Heart right ventricle (tissue), 16 donors: ENCODE measurements at regions of chr15 and their contacts with region 1.

Region 1: GRCh38 chr15:90879408-90880366 is 4.6 kb upstream of the FES start:
- DNase-seq: no peak
- ATAC-seq: no peak
- H3K4me3 ChIP-seq: no peak overlapping the region
- H3K27ac ChIP-seq: no peak overlapping the region
- H3K4me1 ChIP-seq: peaks cover 5 to 30% (median 19%) of the 10 kb centered on the region in 9 donors
- H3K27me3 ChIP-seq: no peaks in the 10 kb centered on the region
- CTCF ChIP-seq: no peak

Region 2: GRCh38 chr15:90706394-90707327 is 173.0 kb before region 1 on chr15:
- intact Hi-C with region 1: loop called in 3 of 10 experiments (anchors 5 to 10 kb)
- DNase-seq: no peak
- ATAC-seq: peak in 2 of 8 donors; percentile 33 to 46
- H3K4me3 ChIP-seq: no peak overlapping the region
- H3K27ac ChIP-seq: no peak overlapping the region
- H3K4me1 ChIP-seq: peaks cover 0 to 5% (median 0%) of the 10 kb centered on the region in 9 donors
- H3K27me3 ChIP-seq: no peaks in the 10 kb centered on the region
- CTCF ChIP-seq: no peak

Region 3: GRCh38 chr15:91007266-91007665 is 127.6 kb after region 1 on chr15:
- intact Hi-C with region 1: no loop called
- DNase-seq: no peak
- ATAC-seq: no peak
- H3K4me3 ChIP-seq: no peak overlapping the region
- H3K27ac ChIP-seq: no peak overlapping the region
- H3K4me1 ChIP-seq: no peaks in the 10 kb centered on the region
- H3K27me3 ChIP-seq: no peaks in the 10 kb centered on the region
- CTCF ChIP-seq: no peak